ENCODE measurements at regions of chr16 and their contacts with region 1.

Region 1: GRCh38 chr16:47141773-47142485 is 1.8 kb downstream of the NETO2 start:
- DNase-seq: peak; percentile 69 to 76 (median 74)
- H3K4me3 ChIP-seq: peak overlapping the region; percentile 67 to 86 (median 84)
- H3K4me3 Mint-ChIP-seq: peak overlapping the region; percentile 89 to 96
- H3K27ac ChIP-seq: peak overlapping the region in 1 of 2 donors; percentile 71
- H3K27ac Mint-ChIP-seq: peak overlapping the region; percentile 85 to 92 (median 91)
- H3K4me1 ChIP-seq: peaks cover 12 to 45% of the 10 kb centered on the region in 2 donors
- H3K4me1 Mint-ChIP-seq: peaks cover 35% of the 10 kb centered on the region
- H3K27me3 ChIP-seq: peaks cover 5 to 22% of the 10 kb centered on the region in 2 donors
- H3K27me3 Mint-ChIP-seq: peaks cover 14 to 25% (median 17%) of the 10 kb centered on the region in 3 donors
- CTCF ChIP-seq: peak; percentile 87

Region 2: DNA sequence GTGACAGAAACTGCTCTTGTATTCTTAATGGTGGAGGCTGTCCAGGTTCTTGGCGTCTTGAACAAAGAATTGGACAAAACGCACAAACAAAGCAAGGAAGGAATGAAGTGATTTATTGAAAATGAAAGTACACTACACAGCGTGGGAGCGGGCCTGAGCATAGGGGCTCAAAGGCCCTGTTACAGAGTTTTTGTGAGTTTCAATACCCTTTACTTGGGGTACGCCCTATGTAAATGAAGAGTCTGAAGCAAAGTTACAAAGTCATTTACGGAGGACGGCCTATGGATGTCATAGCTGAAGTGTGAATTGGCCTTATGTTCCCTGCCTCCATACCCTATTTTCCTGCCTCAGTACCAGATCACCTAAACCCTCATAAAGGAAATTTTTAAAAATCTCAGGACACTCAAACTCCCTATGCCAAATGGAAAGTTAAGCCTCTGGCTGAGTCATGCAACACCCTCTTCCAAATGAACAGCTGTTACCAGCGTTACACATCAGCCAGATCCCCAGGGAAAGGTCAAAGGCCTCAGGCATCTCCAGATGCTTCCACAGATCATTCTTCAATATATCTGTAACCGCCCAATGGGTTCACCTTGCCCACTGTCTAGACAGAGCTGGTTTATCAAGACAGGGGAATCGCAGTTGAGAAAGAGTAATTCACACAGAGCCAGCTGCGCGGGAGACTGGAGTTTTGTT is 491.9 kb before region 1 on chr16:
- intact Hi-C with region 1: no loop called
- DNase-seq: no peak
- H3K4me3 ChIP-seq: no peak overlapping the region
- H3K4me3 Mint-ChIP-seq: no peak overlapping the region
- H3K27ac ChIP-seq: no peak overlapping the region
- H3K27ac Mint-ChIP-seq: peak overlapping the region in 2 of 7 donors; percentile 34 to 68
- H3K4me1 ChIP-seq: no peaks in the 10 kb centered on the region
- H3K4me1 Mint-ChIP-seq: no peaks in the 10 kb centered on the region
- H3K27me3 ChIP-seq: no peaks in the 10 kb centered on the region
- H3K27me3 Mint-ChIP-seq: peaks cover 0 to 2% (median 0%) of the 10 kb centered on the region in 3 donors
- CTCF ChIP-seq: no peak

Region 3: DNA sequence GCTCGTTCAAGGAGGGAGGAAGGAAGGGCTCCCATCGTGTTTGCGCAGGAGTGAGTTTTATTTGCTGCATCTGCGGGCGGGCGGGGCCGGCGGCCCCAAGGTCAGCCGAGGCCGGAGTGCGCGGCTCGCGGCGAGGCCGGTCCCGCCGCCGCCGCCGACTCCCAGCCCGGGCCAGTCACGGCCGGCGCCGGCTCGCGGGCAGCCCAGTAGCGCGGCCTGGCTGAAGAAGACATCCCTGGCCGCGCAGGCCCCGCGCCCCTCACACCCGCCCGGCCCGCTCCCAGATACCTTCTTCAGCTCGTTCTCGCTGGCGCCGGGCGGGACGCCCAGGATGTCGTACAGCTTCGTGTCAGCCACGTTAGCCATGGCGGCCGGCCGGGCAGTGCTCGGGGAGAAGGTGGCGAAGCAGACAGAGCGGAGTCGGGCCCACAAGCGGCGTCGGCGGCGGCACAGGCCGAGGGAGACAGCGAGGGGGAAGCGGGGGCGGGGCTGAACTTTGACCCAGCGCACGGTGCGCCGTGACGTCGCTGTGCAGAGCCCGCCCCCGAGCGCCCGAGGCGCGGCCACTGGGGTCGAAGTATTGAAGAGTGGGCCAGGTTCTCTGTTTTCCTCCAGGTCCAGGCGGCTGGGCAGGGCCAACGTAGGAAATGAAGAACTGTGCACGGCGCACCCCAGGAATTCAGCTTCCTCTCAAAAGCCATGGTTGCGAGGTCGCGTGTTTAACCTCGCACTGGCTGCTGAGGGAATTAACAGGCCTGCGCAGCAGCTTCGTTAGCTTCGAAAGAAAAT is 168.5 kb before region 1 on chr16 and contains the start of gene DNAJA2:
- intact Hi-C with region 1: loop called in 1 of 2 experiments (anchors 5 kb)
- DNase-seq: peak; percentile 91 to 95 (median 93)
- H3K4me3 ChIP-seq: peak within 1 kb of the TSS; percentile 76 to 94 (median 77)
- H3K4me3 Mint-ChIP-seq: peak within 1 kb of the TSS; percentile 92 to 93
- H3K27ac ChIP-seq: peak within 1 kb of the TSS; percentile 92 to 94
- H3K27ac Mint-ChIP-seq: peak within 1 kb of the TSS; percentile 95 to 99 (median 98)
- H3K4me1 ChIP-seq: peaks cover 18 to 25% of the 10 kb centered on the region in 2 donors
- H3K4me1 Mint-ChIP-seq: peaks cover 25% of the 10 kb centered on the region
- H3K27me3 ChIP-seq: no peaks in the 10 kb centered on the region
- H3K27me3 Mint-ChIP-seq: peaks cover 0 to 2% (median 0%) of the 10 kb centered on the region in 3 donors
- CTCF ChIP-seq: no peak
- polyA plus RNA-seq, gene DNAJA2: 14.4 to 63.4 (median 62.9) TPM

Region 4: DNA sequence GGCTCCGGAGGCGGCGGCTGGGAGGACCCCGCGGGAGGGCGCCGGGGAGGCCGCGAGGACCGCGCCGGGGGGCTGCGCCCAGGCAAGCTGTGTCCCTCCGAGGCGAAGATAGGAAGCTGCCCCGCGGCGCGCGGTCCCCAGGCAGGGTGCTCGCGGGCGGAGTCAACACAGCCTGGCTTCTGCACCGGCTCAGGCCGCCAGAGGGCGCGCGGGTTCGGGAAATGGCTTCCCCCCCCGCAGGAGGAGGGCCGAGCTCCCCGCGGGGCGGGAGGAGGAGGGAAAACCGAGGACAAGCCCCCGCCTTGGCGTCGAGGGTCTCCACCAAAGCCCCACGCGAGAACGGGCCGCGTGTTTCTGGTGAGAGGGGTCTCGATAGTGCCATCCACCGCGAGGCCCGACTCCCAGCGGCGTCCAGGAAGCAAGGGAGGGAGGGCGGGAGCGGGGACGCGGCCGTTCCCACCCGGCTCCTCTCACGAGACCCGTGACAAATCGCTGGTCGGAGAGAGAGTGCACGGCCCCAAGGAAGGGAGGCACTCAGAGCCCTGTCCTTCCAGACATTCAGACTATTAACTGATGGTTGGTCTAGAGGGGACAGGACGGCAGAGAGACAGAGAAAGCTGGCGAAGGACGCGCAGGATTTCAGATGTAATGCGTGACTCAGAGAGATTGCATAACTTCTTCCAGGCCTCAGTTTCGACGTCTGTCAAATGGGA is 104.0 kb before region 1 on chr16:
- intact Hi-C with region 1: loop called in 1 of 2 experiments (anchors 5 kb)
- DNase-seq: peak; percentile 82 to 87 (median 86)
- H3K4me3 ChIP-seq: peak overlapping the region; percentile 47 to 81 (median 79)
- H3K4me3 Mint-ChIP-seq: peak overlapping the region; percentile 82 to 93
- H3K27ac ChIP-seq: peak overlapping the region; percentile 48 to 88
- H3K27ac Mint-ChIP-seq: peak overlapping the region; percentile 81 to 93 (median 87)
- H3K4me1 ChIP-seq: peaks cover 6 to 7% of the 10 kb centered on the region in 2 donors
- H3K4me1 Mint-ChIP-seq: peaks cover 9% of the 10 kb centered on the region
- H3K27me3 ChIP-seq: peaks cover 0 to 2% of the 10 kb centered on the region in 2 donors
- H3K27me3 Mint-ChIP-seq: peaks cover 3 to 6% (median 6%) of the 10 kb centered on the region in 3 donors
- CTCF ChIP-seq: peak; percentile 97

Region 5: DNA sequence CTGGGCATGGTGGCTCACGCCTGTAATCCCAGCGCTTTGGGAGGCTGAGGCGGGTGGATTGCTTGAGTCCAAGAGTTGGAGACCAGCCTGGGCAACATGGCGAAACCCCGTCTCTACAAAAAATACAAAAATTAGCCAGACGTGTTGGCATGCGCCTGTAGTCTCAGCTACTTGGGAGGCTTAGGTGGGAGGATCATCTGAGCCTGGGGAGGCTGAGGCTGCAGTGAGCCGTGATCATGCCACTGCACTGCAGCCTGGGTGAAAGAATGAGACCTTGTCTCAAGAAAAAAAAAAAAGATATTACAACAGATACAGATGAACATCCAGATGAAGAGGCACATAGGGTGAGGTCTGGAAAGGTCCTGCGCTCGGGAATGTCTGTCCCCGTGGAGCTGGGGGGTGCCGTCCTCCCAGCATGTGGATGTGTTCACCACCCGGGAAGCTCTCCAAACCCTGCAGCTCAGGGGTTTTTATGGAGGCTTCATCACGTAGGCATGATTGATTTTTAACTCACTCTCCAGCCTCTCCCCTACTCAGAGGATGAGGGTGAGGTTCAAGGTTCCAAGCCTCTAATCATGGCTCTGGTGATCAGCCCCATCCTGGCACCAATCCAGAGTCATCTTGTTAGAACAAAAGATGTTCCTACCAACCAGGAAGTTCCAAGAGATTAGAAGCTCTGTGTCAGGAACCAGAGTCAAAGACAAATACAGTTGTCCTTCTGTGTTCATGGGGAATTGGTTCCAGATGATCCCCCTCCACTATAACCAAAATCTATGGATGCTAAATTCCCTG is 83.4 kb before region 1 on chr16:
- intact Hi-C with region 1: no loop called
- DNase-seq: no peak
- H3K4me3 ChIP-seq: no peak overlapping the region
- H3K4me3 Mint-ChIP-seq: no peak overlapping the region
- H3K27ac ChIP-seq: no peak overlapping the region
- H3K27ac Mint-ChIP-seq: peak overlapping the region in 1 of 7 donors; percentile 42
- H3K4me1 ChIP-seq: no peaks in the 10 kb centered on the region
- H3K4me1 Mint-ChIP-seq: no peaks in the 10 kb centered on the region
- H3K27me3 ChIP-seq: no peaks in the 10 kb centered on the region
- H3K27me3 Mint-ChIP-seq: peaks cover 0 to 4% (median 4%) of the 10 kb centered on the region in 3 donors
- CTCF ChIP-seq: no peak

Region 6: GRCh38 chr16:47460711-47461597 is 319.0 kb after region 1 on chr16 and contains the starts of genes ITFG1 and PHKB:
- intact Hi-C with region 1: loop called in 1 of 2 experiments (anchors 5 kb)
- DNase-seq: peak; percentile 79 to 87 (median 82)
- H3K4me3 ChIP-seq: peak within 1 kb of the TSS; percentile 86 to 99 (median 90)
- H3K4me3 Mint-ChIP-seq: peak within 1 kb of the TSS; percentile 97 to 100
- H3K27ac ChIP-seq: peak within 1 kb of the TSS; percentile 96 to 98
- H3K27ac Mint-ChIP-seq: peak within 1 kb of the TSS; percentile 96 to 99 (median 97)
- H3K4me1 ChIP-seq: peaks cover 18 to 30% of the 10 kb centered on the region in 2 donors
- H3K4me1 Mint-ChIP-seq: peaks cover 52% of the 10 kb centered on the region
- H3K27me3 ChIP-seq: no peaks in the 10 kb centered on the region
- H3K27me3 Mint-ChIP-seq: peaks cover 0 to 1% (median 0%) of the 10 kb centered on the region in 3 donors
- CTCF ChIP-seq: no peak
- polyA plus RNA-seq, gene ITFG1: 28.9 to 62.5 (median 35.3) TPM
- polyA plus RNA-seq, gene PHKB: 49.8 to 53.1 (median 50.8) TPM

Region 7: DNA sequence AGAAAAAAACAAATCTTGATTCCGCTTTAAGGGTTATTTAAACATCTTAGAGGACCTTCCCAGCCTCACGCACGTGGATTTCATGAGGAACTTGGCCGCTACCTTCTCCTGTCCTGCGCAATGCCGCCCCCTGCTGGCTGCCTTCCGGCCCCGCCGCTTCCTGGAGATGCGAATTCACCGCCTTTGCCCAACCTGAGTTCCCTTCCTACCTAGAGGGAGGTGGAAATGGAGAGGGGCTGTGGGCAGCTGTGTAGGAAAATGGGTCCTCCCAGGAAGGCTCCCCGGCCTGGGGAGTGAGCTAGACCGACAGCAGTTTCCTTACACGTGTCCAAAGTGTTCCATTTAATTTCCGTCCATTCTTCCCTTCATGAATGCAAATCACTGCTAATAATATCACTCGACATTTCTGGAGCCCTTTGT is 1014.9 kb after region 1 on chr16:
- intact Hi-C with region 1: loop called (anchors 5 kb)
- DNase-seq: peak; percentile 68 to 77 (median 72)
- H3K4me3 ChIP-seq: no peak overlapping the region
- H3K4me3 Mint-ChIP-seq: no peak overlapping the region
- H3K27ac ChIP-seq: no peak overlapping the region
- H3K27ac Mint-ChIP-seq: peak overlapping the region in 1 of 7 donors; percentile 4
- H3K4me1 ChIP-seq: peaks cover 0 to 3% of the 10 kb centered on the region in 2 donors
- H3K4me1 Mint-ChIP-seq: peaks cover 7% of the 10 kb centered on the region
- H3K27me3 ChIP-seq: peaks cover 0 to 2% of the 10 kb centered on the region in 2 donors
- H3K27me3 Mint-ChIP-seq: peaks cover 8 to 22% (median 10%) of the 10 kb centered on the region in 3 donors
- CTCF ChIP-seq: peak; percentile 96

Region 8: GRCh38 chr16:48632137-48632774 is 1490.3 kb after region 1 on chr16:
- intact Hi-C with region 1: loop called in 1 of 2 experiments (anchors 10 kb)
- DNase-seq: peak in 1 of 3 donors; percentile 32
- H3K4me3 ChIP-seq: no peak overlapping the region
- H3K4me3 Mint-ChIP-seq: no peak overlapping the region
- H3K27ac ChIP-seq: no peak overlapping the region
- H3K27ac Mint-ChIP-seq: peak overlapping the region in 1 of 7 donors; percentile 19
- H3K4me1 ChIP-seq: peaks cover 6 to 11% of the 10 kb centered on the region in 2 donors
- H3K4me1 Mint-ChIP-seq: peaks cover 10% of the 10 kb centered on the region
- H3K27me3 ChIP-seq: no peaks in the 10 kb centered on the region
- H3K27me3 Mint-ChIP-seq: peaks cover 0 to 5% (median under 1%) of the 10 kb centered on the region in 3 donors
- CTCF ChIP-seq: no peak

Measured in CD14-positive monocyte (primary cell).